Activated naive CD8-positive, alpha-beta T cell treated with anti-CD3 and anti-CD28 coated beads, Interleukin-2, amount 10 ng/mL, durations not matched to agents 7 days and 5 days (primary cell): ENCODE measurements at regions of chr1 and their contacts with region 1.

Region 1: GRCh38 chr1:26500488-26501175 is 28.4 kb downstream of the HMGN2 start:
- DNase-seq: peak; percentile 97
- ATAC-seq: peak; percentile 68
- H3K4me3 Mint-ChIP-seq: peak overlapping the region; percentile 89
- H3K27ac Mint-ChIP-seq: peak overlapping the region; percentile 95
- H3K4me1 Mint-ChIP-seq: peaks cover 19% of the 10 kb centered on the region
- H3K27me3 Mint-ChIP-seq: no peaks in the 10 kb centered on the region

Region 2: GRCh38 chr1:26306290-26307229 is 194.1 kb before region 1 on chr1 and contains the start of gene UBXN11:
- POLR2A ChIA-PET with region 1: no interaction called
- DNase-seq: peak; percentile 88
- ATAC-seq: peak; percentile 99
- H3K4me3 Mint-ChIP-seq: peak within 1 kb of the TSS; percentile 94
- H3K27ac Mint-ChIP-seq: peak within 1 kb of the TSS; percentile 97
- H3K4me1 Mint-ChIP-seq: peaks cover 30% of the 10 kb centered on the region
- H3K27me3 Mint-ChIP-seq: no peaks in the 10 kb centered on the region
- total RNA-seq, gene UBXN11: 60.5 to 64.1 TPM

Region 3: DNA sequence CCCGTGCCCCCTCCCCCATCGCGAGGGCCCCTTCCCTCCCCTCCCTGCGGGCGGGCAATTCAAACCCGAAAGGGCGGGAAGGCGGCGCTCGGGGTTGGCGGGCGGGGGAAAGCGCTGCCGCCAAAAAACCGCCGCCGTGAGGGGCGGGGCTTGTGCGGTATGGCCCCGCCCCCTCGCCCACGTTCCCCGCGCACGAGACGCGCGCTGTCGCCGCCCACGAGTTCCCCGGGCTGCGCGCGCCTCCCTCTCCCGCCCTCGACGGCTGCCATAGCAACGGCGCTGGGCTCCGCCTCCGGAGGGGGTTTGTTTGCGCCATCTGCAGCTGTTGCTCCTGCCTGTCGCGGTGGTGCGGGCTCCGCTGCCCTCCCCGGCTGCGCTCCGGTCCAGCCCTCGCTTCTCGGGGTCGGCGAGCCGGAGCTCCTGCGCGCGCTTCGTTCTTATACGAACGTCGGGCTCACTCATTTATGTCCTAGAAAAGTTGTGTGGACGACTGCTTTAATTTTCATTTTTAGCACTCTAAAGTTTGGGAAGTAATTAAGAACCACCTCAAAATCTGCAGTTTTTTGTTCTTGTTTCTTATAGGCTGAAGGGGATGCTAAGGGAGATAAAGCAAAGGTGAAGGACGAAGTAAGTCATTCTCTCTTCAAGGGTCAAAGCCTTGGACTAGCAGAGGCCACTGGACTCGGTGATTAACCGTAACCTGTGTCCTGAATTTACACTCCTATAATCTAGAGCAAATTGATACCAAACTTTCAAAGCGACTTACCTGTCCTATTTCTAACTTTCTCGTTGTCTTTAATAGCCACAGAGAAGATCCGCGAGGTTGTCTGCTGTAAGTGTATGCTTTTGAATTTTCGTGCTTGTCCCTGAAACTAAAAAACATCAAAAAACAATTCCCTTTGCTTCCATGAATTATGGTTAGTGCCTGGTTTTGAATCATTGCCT is 27.5 kb before region 1 on chr1:
- POLR2A ChIA-PET with region 1: interaction called, 18 read pairs
- DNase-seq: peak; percentile 97
- ATAC-seq: peak; percentile 69
- H3K4me3 Mint-ChIP-seq: peak overlapping the region; percentile 91
- H3K27ac Mint-ChIP-seq: peak overlapping the region; percentile 64
- H3K4me1 Mint-ChIP-seq: peaks cover 52% of the 10 kb centered on the region
- H3K27me3 Mint-ChIP-seq: no peaks in the 10 kb centered on the region

Region 4: GRCh38 chr1:26529655-26530409 is 29.2 kb after region 1 on chr1 and contains the start of gene RPS6KA1:
- POLR2A ChIA-PET with region 1: interaction called, 16 read pairs
- DNase-seq: peak; percentile 83
- ATAC-seq: peak; percentile 91
- H3K4me3 Mint-ChIP-seq: peak within 1 kb of the TSS; percentile 91
- H3K27ac Mint-ChIP-seq: peak within 1 kb of the TSS; percentile 87
- H3K4me1 Mint-ChIP-seq: peaks cover 28% of the 10 kb centered on the region
- H3K27me3 Mint-ChIP-seq: peaks cover 4% of the 10 kb centered on the region
- total RNA-seq, gene RPS6KA1: 138 to 153 TPM

Region 5: GRCh38 chr1:26541816-26542711 is 41.4 kb after region 1 on chr1:
- POLR2A ChIA-PET with region 1: interaction called, 67 read pairs
- DNase-seq: peak; percentile 84
- ATAC-seq: peak; percentile 78
- H3K4me3 Mint-ChIP-seq: peak overlapping the region; percentile 77
- H3K27ac Mint-ChIP-seq: peak overlapping the region; percentile 93
- H3K4me1 Mint-ChIP-seq: peaks cover 71% of the 10 kb centered on the region
- H3K27me3 Mint-ChIP-seq: no peaks in the 10 kb centered on the region